ENCODE measurements at regions of chr13 and their contacts with region 1.

Region 1: GRCh38 chr13:107835339-107836018 is 379.9 kb downstream of the LIG4 start:
- DNase-seq: peak; percentile 26
- H3K4me3 Mint-ChIP-seq: peak overlapping the region; percentile 60
- H3K27ac Mint-ChIP-seq: peak overlapping the region; percentile 72
- H3K4me1 Mint-ChIP-seq: peaks cover 10% of the 10 kb centered on the region
- H3K27me3 Mint-ChIP-seq: no peaks in the 10 kb centered on the region
- CTCF ChIP-seq: no peak

Region 2: DNA sequence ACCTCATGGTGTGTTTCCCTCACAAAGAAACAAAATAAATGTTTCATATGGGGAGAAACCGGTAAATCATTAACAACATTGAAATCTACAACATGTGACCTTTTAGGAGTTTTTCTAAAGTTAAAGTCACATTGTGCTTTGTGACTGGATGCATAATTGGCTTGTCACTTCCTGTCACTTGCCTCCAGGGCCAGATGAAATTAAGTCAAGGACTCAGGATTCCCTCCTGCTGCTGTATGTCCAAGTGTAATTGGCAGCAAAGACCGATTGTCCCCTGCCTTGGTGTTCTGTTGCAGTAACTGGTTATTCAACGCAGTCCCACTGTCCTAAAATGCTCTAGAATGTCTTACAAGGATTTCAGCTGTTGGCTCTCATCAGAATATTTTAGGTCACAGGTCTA is 68.4 kb before region 1 on chr13:
- CTCF ChIA-PET with region 1: no interaction called
- intact Hi-C with region 1: loop called (anchors 10 kb)
- DNase-seq: no peak
- H3K4me3 Mint-ChIP-seq: no peak overlapping the region
- H3K27ac Mint-ChIP-seq: peak overlapping the region; percentile 46
- H3K4me1 Mint-ChIP-seq: no peaks in the 10 kb centered on the region
- H3K27me3 Mint-ChIP-seq: no peaks in the 10 kb centered on the region
- CTCF ChIP-seq: no peak

Region 3: GRCh38 chr13:108137176-108137575 is 301.7 kb after region 1 on chr13:
- CTCF ChIA-PET with region 1: no interaction called
- intact Hi-C with region 1: no loop called
- DNase-seq: no peak
- H3K4me3 Mint-ChIP-seq: no peak overlapping the region
- H3K27ac Mint-ChIP-seq: no peak overlapping the region
- H3K4me1 Mint-ChIP-seq: no peaks in the 10 kb centered on the region
- H3K27me3 Mint-ChIP-seq: no peaks in the 10 kb centered on the region
- CTCF ChIP-seq: no peak